Heart left ventricle (tissue), 16 donors: ENCODE measurements at regions of chr10 and their contacts with region 1.

Region 1: GRCh38 chr10:43698156-43698555 is 49.5 kb upstream of the ZNF32 start:
- DNase-seq: peak in 1 of 5 donors; percentile 45
- ATAC-seq: peak in 3 of 4 donors; percentile 36 to 76 (median 49)
- H3K4me3 ChIP-seq: no peak overlapping the region
- H3K27ac ChIP-seq: peak overlapping the region in 5 of 12 donors; percentile 9 to 75 (median 41)
- H3K4me1 ChIP-seq: peaks cover 0 to 52% (median 20%) of the 10 kb centered on the region in 12 donors
- H3K27me3 ChIP-seq: no peaks in the 10 kb centered on the region
- CTCF ChIP-seq: no peak
- POLR2A ChIP-seq: no peak

Region 2: GRCh38 chr10:43808136-43808535 is 110.0 kb after region 1 on chr10:
- intact Hi-C with region 1: loop called in 3 of 10 experiments (anchors 5 to 10 kb)
- DNase-seq: no peak
- ATAC-seq: no peak
- H3K4me3 ChIP-seq: no peak overlapping the region
- H3K27ac ChIP-seq: no peak overlapping the region
- H3K4me1 ChIP-seq: peaks cover 0 to 49% (median 15%) of the 10 kb centered on the region in 12 donors
- H3K27me3 ChIP-seq: no peaks in the 10 kb centered on the region
- CTCF ChIP-seq: no peak
- POLR2A ChIP-seq: no peak